Right ventricle myocardium inferior (tissue), 1 donor: ENCODE measurements at regions of chr16 and their contacts with region 1.

Region 1: DNA sequence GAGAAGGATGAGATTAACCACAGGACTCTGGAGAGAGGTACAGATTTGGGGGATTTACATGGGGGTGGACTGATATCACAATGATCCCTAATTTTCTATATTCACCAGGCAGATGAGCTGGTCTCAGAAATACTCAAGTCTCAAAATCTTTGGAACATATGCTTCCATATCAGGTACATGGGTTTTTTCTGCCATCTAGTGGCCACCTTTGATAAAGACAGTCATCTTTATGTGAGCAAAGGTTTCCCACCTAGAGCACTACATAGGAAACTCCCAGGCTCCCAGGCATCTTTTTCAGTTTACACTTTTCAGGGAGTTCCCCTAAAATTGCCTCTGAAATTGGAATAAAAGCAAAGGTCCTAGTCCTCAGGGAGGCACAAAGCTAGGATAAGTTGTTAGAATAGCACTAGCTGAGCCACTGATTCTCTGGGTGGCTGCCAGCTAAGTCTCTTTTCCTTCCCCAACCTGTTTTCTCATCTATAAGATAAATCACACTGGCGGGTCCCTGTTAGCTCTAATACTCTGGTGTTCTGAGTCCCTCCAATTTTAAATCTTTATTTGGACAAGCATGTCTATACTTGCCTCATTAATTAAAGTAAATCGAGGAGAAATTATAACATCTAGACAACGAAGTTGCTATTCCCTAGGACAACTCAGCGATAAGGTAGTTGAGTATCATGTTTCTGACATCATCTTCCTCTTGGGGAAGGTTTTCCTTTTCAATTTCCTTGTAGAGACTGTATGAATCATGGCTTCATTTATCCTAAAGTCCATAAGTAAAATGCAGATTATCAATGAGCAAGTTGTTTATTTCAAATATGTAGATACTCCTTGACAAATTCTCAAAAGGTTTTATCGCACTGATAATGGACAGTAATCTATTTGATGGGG is 19.0 kb upstream of the MON1B start:
- DNase-seq: no peak
- ATAC-seq: peak; percentile 59

Region 2: DNA sequence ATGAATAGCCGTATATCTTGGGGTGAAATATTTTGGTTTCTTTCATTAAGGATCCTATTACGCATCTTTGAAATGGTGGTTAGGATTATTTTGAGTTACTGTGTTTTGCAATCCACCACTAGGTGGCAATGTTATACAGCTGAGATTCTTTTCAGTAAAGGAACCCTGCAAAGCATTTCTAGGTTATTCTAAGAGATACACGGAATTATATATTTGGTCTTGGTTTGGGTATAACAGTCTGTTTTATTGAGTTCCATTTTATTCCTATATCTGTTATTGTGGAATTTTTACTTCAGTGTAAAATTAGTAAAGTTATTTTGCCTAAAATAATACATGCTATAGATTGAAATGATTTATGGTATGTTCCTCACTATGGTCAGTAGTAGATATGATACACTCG is 1382.8 kb before region 1 on chr16:
- intact Hi-C with region 1: loop called (anchors 2 kb)
- DNase-seq: no peak
- ATAC-seq: no peak

Region 3: GRCh38 chr16:76278980-76279379 is 893.0 kb before region 1 on chr16:
- intact Hi-C with region 1: loop called (anchors 10 kb)
- DNase-seq: no peak
- ATAC-seq: no peak

Region 4: DNA sequence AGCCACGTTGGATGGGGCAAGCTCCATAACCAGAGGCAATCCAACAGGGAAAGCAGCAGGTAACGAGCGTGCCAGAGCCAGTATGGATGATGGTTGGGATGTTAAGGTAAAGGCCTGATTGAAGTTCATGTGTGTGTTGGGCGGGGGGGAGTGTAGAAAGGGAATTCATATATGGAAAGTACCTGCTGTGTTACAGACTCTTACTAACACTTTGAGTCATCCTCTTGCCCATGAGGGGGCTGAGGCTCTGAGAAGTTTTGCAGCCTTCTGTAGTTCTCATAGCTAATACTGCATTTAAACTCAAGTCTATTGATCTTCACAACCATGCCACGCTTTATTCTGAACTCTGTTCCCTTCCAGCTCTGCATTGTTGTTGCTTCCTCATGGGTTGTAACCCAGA is 55.8 kb after region 1 on chr16:
- intact Hi-C with region 1: no loop called
- DNase-seq: no peak
- ATAC-seq: no peak